ENCODE measurements at regions of chr16 and their contacts with region 1.

Region 1: DNA sequence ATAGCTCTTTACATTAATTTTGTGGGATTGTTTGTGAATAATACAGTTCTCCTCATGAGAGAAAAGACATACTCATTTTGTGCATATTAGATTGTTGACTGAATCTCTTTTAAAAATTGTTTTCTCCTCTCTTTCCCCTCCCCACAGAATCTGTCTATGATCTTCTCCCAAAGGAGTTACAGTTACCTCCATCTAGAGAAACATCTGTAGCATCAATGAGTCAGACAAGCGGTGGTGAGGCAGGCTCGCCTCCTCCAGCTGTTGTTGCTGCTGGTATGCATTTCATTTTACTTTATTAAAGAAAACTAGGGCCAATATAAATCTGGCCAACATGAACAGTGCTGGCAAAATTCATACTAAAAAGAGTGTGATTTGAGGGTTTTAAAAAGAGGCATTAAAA is 60.5 kb downstream of the NFAT5 start:
- DNase-seq: no peak
- H3K4me3 Mint-ChIP-seq: no peak overlapping the region
- H3K27ac Mint-ChIP-seq: no peak overlapping the region
- H3K4me1 Mint-ChIP-seq: peaks cover 3% of the 10 kb centered on the region
- H3K27me3 Mint-ChIP-seq: no peaks in the 10 kb centered on the region

Region 2: GRCh38 chr16:69324013-69324531 is 302.2 kb before region 1 on chr16:
- CTCF ChIA-PET with region 1: no interaction called
- POLR2A ChIA-PET with region 1: no interaction called
- intact Hi-C with region 1: no loop called
- DNase-seq: no peak
- H3K4me3 Mint-ChIP-seq: no peak overlapping the region
- H3K27ac Mint-ChIP-seq: no peak overlapping the region
- H3K4me1 Mint-ChIP-seq: peaks cover 40% of the 10 kb centered on the region
- H3K27me3 Mint-ChIP-seq: no peaks in the 10 kb centered on the region

Region 3: DNA sequence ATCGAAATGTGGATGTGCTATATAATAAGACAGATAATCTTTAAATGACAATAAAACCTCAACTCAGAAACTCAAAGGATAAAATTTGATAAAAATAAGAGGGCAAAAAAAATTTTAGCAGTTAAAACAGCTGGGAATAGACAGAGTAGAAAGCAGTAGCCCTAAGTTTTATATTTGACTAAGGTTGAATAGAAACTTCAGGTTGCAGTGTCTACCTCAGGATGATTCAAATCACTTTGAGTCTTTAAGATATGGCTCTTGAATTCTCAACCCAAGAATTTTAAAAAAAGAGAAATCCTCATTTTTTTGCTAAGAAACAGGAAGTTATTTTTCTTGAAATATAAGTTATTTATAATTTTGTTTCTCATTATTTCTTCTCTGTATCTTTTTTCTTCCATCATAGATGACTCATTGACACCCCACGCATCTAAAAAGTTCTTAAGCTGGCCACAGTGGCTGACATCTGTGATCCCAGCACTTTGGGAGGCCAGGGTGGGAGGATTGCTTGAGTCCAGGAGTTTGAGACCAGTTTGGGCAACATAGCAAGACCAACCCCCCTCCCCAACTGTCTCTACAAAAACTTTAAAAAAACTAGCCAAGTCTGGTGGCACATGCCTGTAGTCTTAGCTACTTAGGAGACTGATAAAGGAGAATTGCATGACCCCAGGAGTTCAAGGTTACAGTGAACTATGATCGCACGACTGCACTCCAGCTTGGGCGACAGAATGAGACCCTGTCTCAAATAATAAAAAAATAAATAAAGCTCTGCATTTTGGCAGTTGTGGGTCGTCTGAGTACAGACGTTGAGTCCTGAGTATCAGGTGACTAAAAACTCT is 36.6 kb before region 1 on chr16:
- CTCF ChIA-PET with region 1: no interaction called
- POLR2A ChIA-PET with region 1: no interaction called
- intact Hi-C with region 1: loop called (anchors 5 kb)
- DNase-seq: no peak
- H3K4me3 Mint-ChIP-seq: no peak overlapping the region
- H3K27ac Mint-ChIP-seq: no peak overlapping the region
- H3K4me1 Mint-ChIP-seq: peaks cover 51% of the 10 kb centered on the region
- H3K27me3 Mint-ChIP-seq: no peaks in the 10 kb centered on the region

Measured in activated CD4-positive, alpha-beta memory T cell treated with anti-CD3 and anti-CD28 coated beads for 36 hours (primary cell).